SK-N-SH (cell line): ENCODE measurements at regions of chr7 and their contacts with region 1.

Region 1: DNA sequence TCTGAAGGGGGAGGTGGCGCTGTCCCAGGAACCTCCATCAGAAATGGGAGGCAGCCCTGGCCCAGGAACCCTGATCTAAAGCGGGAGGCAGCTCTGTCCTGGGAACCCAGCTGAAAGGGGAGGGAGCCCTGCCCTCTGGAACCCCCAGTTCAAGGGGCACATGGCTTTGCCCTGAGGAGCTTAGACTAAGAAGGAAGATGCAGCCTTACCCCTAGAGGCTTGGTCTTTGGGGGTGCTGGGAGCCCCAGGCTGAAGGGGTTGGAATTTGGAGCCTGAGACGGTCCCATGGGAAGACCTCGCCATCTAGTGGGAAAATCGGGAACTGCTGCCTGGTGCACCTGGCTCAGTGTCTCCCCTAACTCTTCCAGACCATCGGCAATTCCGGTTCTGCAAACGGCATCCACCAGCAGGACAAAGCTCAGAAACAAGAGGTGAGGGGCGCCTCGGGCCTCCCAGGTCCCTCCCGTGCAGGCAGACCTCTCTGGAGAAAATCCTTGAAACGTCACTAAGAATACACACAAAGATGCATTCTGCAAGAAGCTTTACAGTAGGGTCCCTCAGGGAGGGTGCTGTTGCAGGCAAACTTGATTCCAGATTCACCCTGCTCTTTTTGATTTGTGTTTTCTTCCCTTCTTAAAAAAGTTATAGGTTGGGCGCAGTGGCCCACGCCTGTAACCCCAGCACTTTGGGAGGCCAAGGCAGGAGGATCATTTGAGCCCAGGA is 52.4 kb upstream of the GTF2IRD1 start:
- DNase-seq: peak; percentile 91
- H3K4me3 ChIP-seq: no peak overlapping the region
- H3K27ac ChIP-seq: no peak overlapping the region
- H3K4me1 ChIP-seq: no peaks in the 10 kb centered on the region
- H3K27me3 ChIP-seq: no peaks in the 10 kb centered on the region
- CTCF ChIP-seq: peak; percentile 100
- EP300 ChIP-seq: no peak
- RAD21 ChIP-seq: peak; percentile 97

Region 2: GRCh38 chr7:74183613-74184450 is 217.5 kb before region 1 on chr7:
- CTCF ChIA-PET with region 1: interaction called, 19 read pairs
- POLR2A ChIA-PET with region 1: no interaction called
- DNase-seq: peak; percentile 49
- H3K4me3 ChIP-seq: no peak overlapping the region
- H3K27ac ChIP-seq: no peak overlapping the region; a peak in 1 of 4 replicates
- H3K4me1 ChIP-seq: peaks cover 17 to 28% of the 10 kb centered on the region in 2 experiments; a peak in 3 of 4 replicates
- H3K27me3 ChIP-seq: no peaks in the 10 kb centered on the region
- CTCF ChIP-seq: peak; percentile 58
- EP300 ChIP-seq: no peak
- RAD21 ChIP-seq: peak; percentile 52

Region 3: GRCh38 chr7:74254129-74254857 is 147.0 kb before region 1 on chr7 and contains the start of gene RFC2:
- CTCF ChIA-PET with region 1: interaction called, 14 read pairs
- POLR2A ChIA-PET with region 1: interaction called, 4 read pairs
- DNase-seq: peak; percentile 100
- H3K4me3 ChIP-seq: peak within 1 kb of the TSS; percentile 65 to 82
- H3K27ac ChIP-seq: peak within 1 kb of the TSS; percentile 92 to 96
- H3K4me1 ChIP-seq: peaks cover 5 to 6% of the 10 kb centered on the region in 2 experiments; a peak in 1 of 4 replicates
- H3K27me3 ChIP-seq: no peaks in the 10 kb centered on the region
- CTCF ChIP-seq: no peak
- EP300 ChIP-seq: no peak
- RAD21 ChIP-seq: peak; percentile 5; the same call in 1 of the 2 replicates
- polyA plus RNA-seq, gene RFC2: 31.2 and 36.1 TPM in 2 replicates

Region 4: GRCh38 chr7:74302745-74303221 is 98.5 kb before region 1 on chr7:
- CTCF ChIA-PET with region 1: interaction called, 30 read pairs
- POLR2A ChIA-PET with region 1: interaction called, 3 read pairs
- DNase-seq: peak; percentile 64
- H3K4me3 ChIP-seq: no peak overlapping the region
- H3K27ac ChIP-seq: no peak overlapping the region
- H3K4me1 ChIP-seq: peaks cover 14 to 18% of the 10 kb centered on the region in 2 experiments; a peak in 3 of 4 replicates
- H3K27me3 ChIP-seq: no peaks in the 10 kb centered on the region
- CTCF ChIP-seq: no peak
- EP300 ChIP-seq: no peak
- RAD21 ChIP-seq: no peak

Region 5: GRCh38 chr7:74379938-74380337 is 21.4 kb before region 1 on chr7:
- CTCF ChIA-PET with region 1: interaction called, 47 read pairs
- POLR2A ChIA-PET with region 1: no interaction called
- DNase-seq: peak; percentile 14
- H3K4me3 ChIP-seq: no peak overlapping the region
- H3K27ac ChIP-seq: no peak overlapping the region
- H3K4me1 ChIP-seq: no peaks in the 10 kb centered on the region
- H3K27me3 ChIP-seq: no peaks in the 10 kb centered on the region
- CTCF ChIP-seq: no peak
- EP300 ChIP-seq: no peak
- RAD21 ChIP-seq: no peak

Region 6: GRCh38 chr7:74482629-74483401 is 81.5 kb after region 1 on chr7:
- CTCF ChIA-PET with region 1: no interaction called
- POLR2A ChIA-PET with region 1: no interaction called
- DNase-seq: no peak
- H3K4me3 ChIP-seq: no peak overlapping the region
- H3K27ac ChIP-seq: peak overlapping the region in 1 of 2 experiments; percentile 60; a peak in 2 of 4 replicates
- H3K4me1 ChIP-seq: peaks cover 39 to 43% of the 10 kb centered on the region in 2 experiments; a peak in 3 of 4 replicates
- H3K27me3 ChIP-seq: no peaks in the 10 kb centered on the region
- CTCF ChIP-seq: no peak
- EP300 ChIP-seq: no peak
- RAD21 ChIP-seq: no peak

Region 7: GRCh38 chr7:74569501-74570075 is 168.3 kb after region 1 on chr7:
- CTCF ChIA-PET with region 1: interaction called, 25 read pairs
- POLR2A ChIA-PET with region 1: no interaction called
- DNase-seq: peak; percentile 70
- H3K4me3 ChIP-seq: no peak overlapping the region
- H3K27ac ChIP-seq: peak overlapping the region in 1 of 2 experiments; percentile 6; a peak in 1 of 4 replicates
- H3K4me1 ChIP-seq: peaks cover 0 to 8% of the 10 kb centered on the region in 2 experiments; a peak in 1 of 4 replicates
- H3K27me3 ChIP-seq: no peaks in the 10 kb centered on the region
- CTCF ChIP-seq: no peak
- EP300 ChIP-seq: no peak
- RAD21 ChIP-seq: no peak